OCI-LY7 (cell line): ENCODE measurements at regions of chr4 and their contacts with region 1.

Region 1: GRCh38 chr4:83012687-83013419 is 2.2 kb upstream of the LIN54 start:
- DNase-seq: peak; percentile 99
- H3K4me3 ChIP-seq: peak overlapping the region; percentile 97
- H3K27ac ChIP-seq: peak overlapping the region; percentile 92
- H3K4me1 ChIP-seq: peaks cover 23% of the 10 kb centered on the region
- CTCF ChIP-seq: peak; percentile 47

Region 2: DNA sequence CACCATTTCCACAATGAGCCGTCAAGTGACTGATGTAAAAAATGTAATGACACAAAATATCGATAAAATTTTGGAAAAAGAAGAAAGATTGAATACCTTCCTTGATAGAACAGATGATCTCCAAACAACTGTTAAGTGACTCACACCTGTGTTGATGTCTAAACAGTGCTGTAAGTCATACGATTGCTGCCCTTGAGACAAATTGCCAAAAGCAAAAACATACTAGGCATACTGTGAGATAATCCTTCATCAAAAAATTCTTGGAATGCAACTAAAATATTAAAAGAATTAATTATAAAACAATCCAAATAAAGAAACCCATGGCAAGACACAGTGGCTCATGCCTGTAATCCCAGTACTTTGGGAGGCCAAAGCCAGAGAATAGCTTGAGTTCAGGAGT is 692.5 kb before region 1 on chr4:
- CTCF ChIA-PET with region 1: no interaction called
- POLR2A ChIA-PET with region 1: no interaction called
- intact Hi-C with region 1: no loop called
- DNase-seq: no peak
- H3K4me3 ChIP-seq: no peak overlapping the region
- H3K27ac ChIP-seq: no peak overlapping the region
- H3K4me1 ChIP-seq: peaks cover 4% of the 10 kb centered on the region
- CTCF ChIP-seq: no peak

Region 3: DNA sequence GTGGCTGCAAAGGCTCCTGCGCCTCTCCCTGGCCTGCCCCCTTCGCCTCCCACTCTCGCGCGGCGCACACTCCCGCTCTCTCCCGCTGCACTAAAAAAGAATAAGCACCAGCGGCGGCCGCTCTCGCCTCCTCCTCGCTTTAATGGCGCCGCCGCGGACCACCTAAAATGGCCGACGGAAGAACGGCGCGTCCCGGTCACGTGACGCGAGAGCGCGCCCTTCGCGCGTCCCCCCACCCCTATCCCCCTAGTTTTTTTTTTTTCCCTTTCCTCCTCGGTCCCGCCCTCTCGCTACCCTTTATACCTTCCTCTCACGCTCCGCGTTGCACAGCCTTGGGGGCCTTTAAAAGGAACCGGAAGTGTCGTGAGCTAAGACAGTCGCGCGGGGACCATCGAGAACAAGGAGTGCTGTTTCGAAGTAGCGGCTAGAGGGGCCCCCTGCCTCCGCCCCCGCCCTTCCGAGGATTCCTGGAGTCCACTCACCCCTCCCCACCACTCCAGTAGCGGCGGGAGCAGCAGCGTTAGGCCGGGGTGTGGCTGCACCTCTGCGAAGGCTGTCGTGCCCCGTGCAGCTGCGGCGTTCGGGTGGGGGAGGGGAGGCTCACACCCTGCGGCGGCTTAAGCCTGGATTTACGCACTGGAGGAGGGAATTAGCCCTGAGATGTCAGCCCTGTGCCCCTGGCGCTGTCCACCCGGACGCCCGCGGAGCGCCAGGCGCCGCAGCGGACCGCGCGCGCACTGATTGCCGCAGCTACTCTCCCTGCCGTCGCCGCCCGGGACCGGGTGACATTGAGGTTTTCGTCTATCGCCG is 638.8 kb before region 1 on chr4 and contains the start of gene HNRNPD:
- CTCF ChIA-PET with region 1: no interaction called
- POLR2A ChIA-PET with region 1: no interaction called
- intact Hi-C with region 1: loop called (anchors 5 kb)
- DNase-seq: peak; percentile 99
- H3K4me3 ChIP-seq: peak within 1 kb of the TSS; percentile 99
- H3K27ac ChIP-seq: peak within 1 kb of the TSS; percentile 85
- H3K4me1 ChIP-seq: peaks cover 29% of the 10 kb centered on the region
- CTCF ChIP-seq: no peak
- total RNA-seq, gene HNRNPD: 127 and 159 TPM in 2 replicates

Region 4: GRCh38 chr4:82599336-82599735 is 413.5 kb before region 1 on chr4:
- CTCF ChIA-PET with region 1: no interaction called
- POLR2A ChIA-PET with region 1: no interaction called
- intact Hi-C with region 1: no loop called
- DNase-seq: peak; percentile 13
- H3K4me3 ChIP-seq: no peak overlapping the region
- H3K27ac ChIP-seq: no peak overlapping the region
- H3K4me1 ChIP-seq: no peaks in the 10 kb centered on the region
- CTCF ChIP-seq: peak; percentile 33; the same call in 1 of the 2 replicates

Region 5: GRCh38 chr4:82890901-82891706 is 121.7 kb before region 1 on chr4 and contains the start of gene SEC31A:
- CTCF ChIA-PET with region 1: no interaction called
- POLR2A ChIA-PET with region 1: interaction called, 4 read pairs
- intact Hi-C with region 1: loop called (anchors 2 kb)
- DNase-seq: peak; percentile 97
- H3K4me3 ChIP-seq: peak within 1 kb of the TSS; percentile 80
- H3K27ac ChIP-seq: peak within 1 kb of the TSS; percentile 84
- H3K4me1 ChIP-seq: peaks cover 53% of the 10 kb centered on the region
- CTCF ChIP-seq: peak; percentile 44
- total RNA-seq, gene SEC31A: 80.0 and 93.4 TPM in 2 replicates

Region 6: DNA sequence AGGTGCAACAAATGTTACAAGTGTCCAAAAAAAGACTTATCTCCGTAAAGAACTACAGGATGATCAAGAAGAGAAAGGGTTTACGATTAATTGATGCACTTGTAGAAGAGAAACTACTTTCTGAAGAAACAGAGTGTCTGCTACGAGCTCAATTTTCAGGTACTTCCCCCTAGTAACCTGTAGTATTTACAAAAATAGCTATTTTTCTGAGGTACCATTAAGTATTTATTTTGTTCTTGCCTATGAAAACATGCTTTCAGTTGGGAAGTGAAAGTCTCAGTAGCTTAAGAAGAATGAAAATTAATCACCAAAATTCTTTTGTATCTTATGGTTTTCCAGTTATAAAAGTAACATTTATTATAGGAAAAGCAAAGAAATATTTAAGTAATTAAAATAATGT is 106.4 kb before region 1 on chr4:
- CTCF ChIA-PET with region 1: no interaction called
- POLR2A ChIA-PET with region 1: interaction called, 12 read pairs
- intact Hi-C with region 1: no loop called
- DNase-seq: no peak
- H3K4me3 ChIP-seq: peak overlapping the region; percentile 48
- H3K27ac ChIP-seq: peak overlapping the region; percentile 57
- H3K4me1 ChIP-seq: peaks cover 46% of the 10 kb centered on the region
- CTCF ChIP-seq: no peak

Region 7: GRCh38 chr4:83034630-83035494 is 22.0 kb after region 1 on chr4 and contains the start of gene COPS4:
- CTCF ChIA-PET with region 1: interaction called, 5 read pairs
- POLR2A ChIA-PET with region 1: interaction called, 50 read pairs
- intact Hi-C with region 1: loop called (anchors 1 kb)
- DNase-seq: peak; percentile 100
- H3K4me3 ChIP-seq: peak within 1 kb of the TSS; percentile 82
- H3K27ac ChIP-seq: peak within 1 kb of the TSS; percentile 78
- H3K4me1 ChIP-seq: peaks cover 33% of the 10 kb centered on the region
- CTCF ChIP-seq: peak; percentile 72
- total RNA-seq, gene COPS4: 38.9 and 44.2 TPM in 2 replicates